Activated naive CD4-positive, alpha-beta T cell treated with anti-CD3 and anti-CD28 coated beads, Interleukin-2, amount 10 ng/mL, durations not matched to agents 7 days and 5 days (primary cell): ENCODE measurements at regions of chr19 and their contacts with region 1.

Region 1: DNA sequence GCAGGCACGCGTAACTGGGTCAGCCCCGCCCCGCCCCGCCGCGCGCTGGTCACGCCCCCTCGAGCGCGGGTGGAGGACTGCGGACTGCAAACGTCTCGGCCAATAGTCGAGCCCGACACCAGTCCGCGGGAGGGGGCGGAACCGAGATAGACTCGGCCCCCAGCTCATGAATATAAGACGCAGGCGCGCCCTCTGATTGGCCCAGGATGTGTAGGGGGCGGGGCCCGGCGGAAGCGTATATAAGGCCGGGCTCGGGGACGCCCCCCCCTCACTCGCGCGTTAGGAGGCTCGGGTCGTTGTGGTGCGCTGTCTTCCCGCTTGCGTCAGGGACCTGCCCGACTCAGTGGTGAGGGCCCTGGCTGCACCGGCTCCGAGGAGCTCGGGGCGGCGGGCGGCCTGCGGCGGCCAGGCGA is at the start of gene CIRBP:
- DNase-seq: peak; percentile 100
- H3K4me3 Mint-ChIP-seq: peak within 1 kb of the TSS; percentile 87
- H3K27ac Mint-ChIP-seq: peak within 1 kb of the TSS; percentile 90
- H3K4me1 Mint-ChIP-seq: peaks cover 71% of the 10 kb centered on the region
- H3K27me3 Mint-ChIP-seq: peaks cover 9% of the 10 kb centered on the region

Region 2: GRCh38 chr19:892243-893050 is 376.6 kb before region 1 on chr19:
- CTCF ChIA-PET with region 1: no interaction called
- DNase-seq: peak; percentile 75
- H3K4me3 Mint-ChIP-seq: peak overlapping the region; percentile 92
- H3K27ac Mint-ChIP-seq: peak overlapping the region; percentile 84
- H3K4me1 Mint-ChIP-seq: peaks cover 24% of the 10 kb centered on the region
- H3K27me3 Mint-ChIP-seq: no peaks in the 10 kb centered on the region

Region 3: DNA sequence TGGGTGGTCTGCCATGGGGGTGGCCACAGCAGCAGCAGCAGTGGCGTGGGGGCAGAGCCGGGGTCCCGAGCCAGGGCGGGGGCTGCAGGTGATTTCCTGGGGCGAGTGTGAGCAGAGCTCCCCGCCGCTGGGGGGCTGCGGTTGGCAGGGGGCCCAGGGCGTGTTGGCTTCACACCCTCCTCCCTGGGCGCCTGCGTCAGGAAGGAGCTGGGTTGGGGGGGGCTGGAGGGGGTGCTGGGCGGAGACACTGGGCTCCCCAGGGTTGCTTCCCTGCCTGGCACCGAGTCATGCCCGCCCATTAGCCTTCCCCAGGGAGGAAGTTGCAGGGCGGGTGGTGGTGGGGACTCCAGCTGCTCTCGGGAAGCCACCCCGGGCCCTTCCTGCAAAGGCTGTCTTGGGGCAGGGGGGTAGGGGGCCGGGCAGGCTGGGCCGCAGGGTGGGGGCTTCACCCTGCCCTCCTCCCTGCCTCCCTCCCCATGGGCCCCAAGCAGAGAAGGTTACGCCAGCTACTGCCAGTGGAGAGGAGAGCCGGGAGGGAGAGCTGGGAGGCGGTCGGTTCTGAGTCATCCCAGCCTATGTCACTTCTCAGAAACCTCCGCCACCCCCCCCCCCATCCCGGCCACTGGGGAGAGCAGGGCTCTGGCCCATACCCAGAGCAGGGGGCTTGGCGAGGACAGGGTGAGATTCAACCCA is 16.1 kb before region 1 on chr19:
- CTCF ChIA-PET with region 1: interaction called, 18 read pairs
- DNase-seq: peak; percentile 88
- H3K4me3 Mint-ChIP-seq: peak overlapping the region; percentile 95
- H3K27ac Mint-ChIP-seq: peak overlapping the region; percentile 84
- H3K4me1 Mint-ChIP-seq: peaks cover 23% of the 10 kb centered on the region
- H3K27me3 Mint-ChIP-seq: no peaks in the 10 kb centered on the region